Aorta (tissue), 5 donors: ENCODE measurements at regions of chr7 and their contacts with region 1.

Region 1: GRCh38 chr7:43834463-43835251 is 34.7 kb downstream of the MRPS24 start:
- DNase-seq: no peak
- ATAC-seq: no peak
- H3K4me3 ChIP-seq: no peak overlapping the region
- H3K27ac ChIP-seq: no peak overlapping the region
- H3K4me1 ChIP-seq: no peaks in the 10 kb centered on the region
- H3K27me3 ChIP-seq: no peaks in the 10 kb centered on the region

Region 2: DNA sequence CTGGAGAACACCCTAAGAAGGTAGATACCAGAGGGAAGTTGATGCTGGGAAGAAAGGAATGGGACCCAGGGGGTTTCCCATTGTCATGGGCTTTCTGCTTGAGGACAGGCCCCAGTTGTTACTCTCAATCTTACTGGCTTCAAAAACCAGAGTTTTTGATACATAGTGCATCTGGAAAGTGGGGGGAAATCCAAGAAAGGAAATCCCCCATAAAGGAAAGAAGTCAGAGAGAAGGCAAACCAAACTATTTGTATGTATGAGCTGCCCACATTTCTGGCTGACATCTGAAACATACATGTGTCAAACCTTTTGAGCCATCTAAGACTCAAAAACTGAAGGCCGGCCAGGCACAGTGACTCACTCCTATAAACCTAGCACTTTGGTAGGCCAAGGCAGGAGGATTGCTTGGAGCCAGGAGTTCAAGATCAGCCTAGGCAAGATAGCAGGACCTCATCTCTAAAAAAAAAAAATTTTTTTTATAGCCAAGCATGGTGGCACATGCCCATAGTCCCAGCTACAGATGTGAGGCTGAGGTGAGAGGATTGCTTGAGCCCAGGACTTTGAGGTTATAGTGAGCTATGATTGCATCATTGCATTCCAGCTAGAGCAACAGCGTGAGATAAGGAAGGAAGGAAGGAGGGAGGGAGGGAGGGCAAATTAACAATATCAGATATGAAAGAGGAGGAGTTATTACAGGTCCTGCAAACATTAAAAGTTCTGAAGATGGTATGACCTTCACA is 98.7 kb before region 1 on chr7:
- intact Hi-C with region 1: loop called in 1 of 2 experiments (anchors 10 kb)
- DNase-seq: no peak
- ATAC-seq: no peak
- H3K4me3 ChIP-seq: no peak overlapping the region
- H3K27ac ChIP-seq: no peak overlapping the region
- H3K4me1 ChIP-seq: no peaks in the 10 kb centered on the region
- H3K27me3 ChIP-seq: no peaks in the 10 kb centered on the region

Region 3: GRCh38 chr7:44534501-44534900 is 699.8 kb after region 1 on chr7:
- intact Hi-C with region 1: no loop called
- DNase-seq: no peak
- ATAC-seq: no peak
- H3K4me3 ChIP-seq: no peak overlapping the region
- H3K27ac ChIP-seq: no peak overlapping the region
- H3K4me1 ChIP-seq: no peaks in the 10 kb centered on the region
- H3K27me3 ChIP-seq: no peaks in the 10 kb centered on the region